ENCODE measurements at regions of chr17 and their contacts with region 1.

Region 1: GRCh38 chr17:45218895-45219661 is 2.6 kb upstream of the FMNL1 start:
- DNase-seq: peak; percentile 85 to 87
- ATAC-seq: peak; percentile 61 to 82
- H3K4me3 ChIP-seq: no peak overlapping the region
- H3K27ac ChIP-seq: peak overlapping the region; percentile 97
- H3K4me1 ChIP-seq: peaks cover 37% of the 10 kb centered on the region
- CTCF ChIP-seq: peak; percentile 99
- EP300 ChIP-seq: no peak
- POLR2A ChIP-seq: no peak
- RAD21 ChIP-seq: peak; percentile 99 to 100

Region 2: GRCh38 chr17:44961921-44962350 is 257.1 kb before region 1 on chr17:
- CTCF ChIA-PET with region 1: no interaction called
- POLR2A ChIA-PET with region 1: no interaction called
- DNase-seq: peak in 1 of 2 experiments; percentile 62
- ATAC-seq: peak; percentile 78 to 89
- H3K4me3 ChIP-seq: no peak overlapping the region
- H3K27ac ChIP-seq: peak overlapping the region in 1 of 2 experiments; percentile 0; a peak in 1 of 6 replicates
- H3K4me1 ChIP-seq: peaks cover 18% of the 10 kb centered on the region
- CTCF ChIP-seq: 0 out of 3 replicates have a peak, but pooled peaks have one; percentile 17
- EP300 ChIP-seq: no peak
- POLR2A ChIP-seq: no peak
- RAD21 ChIP-seq: peak; percentile 13 to 54; a peak in 2 of 5 replicates

Region 3: DNA sequence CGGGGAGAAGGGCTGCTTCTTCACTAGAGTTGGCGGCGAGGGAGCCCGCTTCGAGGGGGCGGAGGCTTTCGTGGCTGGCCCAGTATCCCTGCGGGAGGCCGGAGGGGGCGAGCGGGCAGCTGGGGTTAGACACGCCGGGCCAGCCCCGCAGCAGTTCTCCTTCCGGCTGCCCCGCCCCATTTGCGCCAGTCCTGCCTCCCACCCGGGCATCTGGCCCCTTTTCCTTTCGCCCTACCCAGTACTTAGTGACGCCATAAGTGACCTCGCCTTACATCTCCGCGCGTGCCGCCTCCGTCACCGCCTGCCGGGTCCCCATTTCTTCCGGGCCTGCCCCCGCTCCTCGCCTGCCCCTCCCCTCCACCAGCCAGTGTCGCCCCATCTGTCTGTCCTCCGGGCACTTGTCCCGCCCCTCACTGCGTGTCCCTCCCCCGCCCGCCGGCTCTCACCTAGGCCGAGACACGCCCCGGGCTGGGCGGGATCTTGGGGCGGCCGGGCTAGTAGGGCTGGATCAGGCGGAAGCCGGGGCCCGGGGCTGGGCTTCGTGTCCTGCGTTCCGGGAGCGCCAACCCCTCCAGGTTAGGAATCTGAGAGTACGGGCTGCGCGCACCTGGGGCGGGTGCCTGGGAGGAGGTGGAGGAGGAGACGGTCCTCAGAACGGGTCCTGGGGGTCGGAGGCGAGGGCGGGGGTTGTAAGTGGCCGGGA is 28.5 kb after region 1 on chr17:
- CTCF ChIA-PET with region 1: interaction called, 1,378 read pairs
- POLR2A ChIA-PET with region 1: interaction called, 4 read pairs
- DNase-seq: peak; percentile 99 to 100
- ATAC-seq: peak; percentile 79 to 91
- H3K4me3 ChIP-seq: peak overlapping the region; percentile 89
- H3K27ac ChIP-seq: peak overlapping the region; percentile 93 to 96
- H3K4me1 ChIP-seq: peaks cover 49% of the 10 kb centered on the region
- CTCF ChIP-seq: no peak
- EP300 ChIP-seq: peak; percentile 78 to 91; a peak in 3 of 5 replicates
- POLR2A ChIP-seq: peak; percentile 70
- RAD21 ChIP-seq: no peak; a peak in 1 of 5 replicates

Region 4: GRCh38 chr17:45299339-45299738 is 80.3 kb after region 1 on chr17:
- CTCF ChIA-PET with region 1: interaction called, 10 read pairs
- POLR2A ChIA-PET with region 1: no interaction called
- DNase-seq: no peak
- ATAC-seq: peak in 1 of 2 experiments; percentile 18; a peak in 3 of 6 replicates
- H3K4me3 ChIP-seq: no peak overlapping the region
- H3K27ac ChIP-seq: peak overlapping the region; percentile 48 to 61
- H3K4me1 ChIP-seq: peaks cover 91% of the 10 kb centered on the region
- CTCF ChIP-seq: no peak
- EP300 ChIP-seq: no peak
- POLR2A ChIP-seq: no peak
- RAD21 ChIP-seq: no peak

Region 5: GRCh38 chr17:45317112-45317928 is 98.2 kb after region 1 on chr17:
- CTCF ChIA-PET with region 1: interaction called, 28 read pairs
- POLR2A ChIA-PET with region 1: interaction called, 3 read pairs
- DNase-seq: peak; percentile 100
- ATAC-seq: peak; percentile 79 to 83
- H3K4me3 ChIP-seq: peak overlapping the region; percentile 69
- H3K27ac ChIP-seq: peak overlapping the region; percentile 95
- H3K4me1 ChIP-seq: peaks cover 73% of the 10 kb centered on the region
- CTCF ChIP-seq: no peak
- EP300 ChIP-seq: no peak
- POLR2A ChIP-seq: peak; percentile 68
- RAD21 ChIP-seq: no peak

Region 6: GRCh38 chr17:45385331-45385997 is 166.4 kb after region 1 on chr17:
- CTCF ChIA-PET with region 1: interaction called, 299 read pairs
- POLR2A ChIA-PET with region 1: interaction called, 5 read pairs
- DNase-seq: peak; percentile 91 to 94
- ATAC-seq: peak; percentile 93 to 97
- H3K4me3 ChIP-seq: no peak overlapping the region
- H3K27ac ChIP-seq: peak overlapping the region; percentile 79 to 97
- H3K4me1 ChIP-seq: peaks cover 50% of the 10 kb centered on the region
- CTCF ChIP-seq: peak; percentile 99
- EP300 ChIP-seq: no peak
- POLR2A ChIP-seq: no peak
- RAD21 ChIP-seq: peak; percentile 100

Measured in A549 (cell line).